OCI-LY7 (cell line): ENCODE measurements at regions of chr1 and their contacts with region 1.

Region 1: GRCh38 chr1:161071886-161072371 is 2.2 kb upstream of the ARHGAP30 start:
- DNase-seq: peak; percentile 70
- H3K4me3 ChIP-seq: no peak overlapping the region
- H3K27ac ChIP-seq: no peak overlapping the region
- H3K4me1 ChIP-seq: peaks cover 26% of the 10 kb centered on the region
- CTCF ChIP-seq: peak; percentile 76

Region 2: DNA sequence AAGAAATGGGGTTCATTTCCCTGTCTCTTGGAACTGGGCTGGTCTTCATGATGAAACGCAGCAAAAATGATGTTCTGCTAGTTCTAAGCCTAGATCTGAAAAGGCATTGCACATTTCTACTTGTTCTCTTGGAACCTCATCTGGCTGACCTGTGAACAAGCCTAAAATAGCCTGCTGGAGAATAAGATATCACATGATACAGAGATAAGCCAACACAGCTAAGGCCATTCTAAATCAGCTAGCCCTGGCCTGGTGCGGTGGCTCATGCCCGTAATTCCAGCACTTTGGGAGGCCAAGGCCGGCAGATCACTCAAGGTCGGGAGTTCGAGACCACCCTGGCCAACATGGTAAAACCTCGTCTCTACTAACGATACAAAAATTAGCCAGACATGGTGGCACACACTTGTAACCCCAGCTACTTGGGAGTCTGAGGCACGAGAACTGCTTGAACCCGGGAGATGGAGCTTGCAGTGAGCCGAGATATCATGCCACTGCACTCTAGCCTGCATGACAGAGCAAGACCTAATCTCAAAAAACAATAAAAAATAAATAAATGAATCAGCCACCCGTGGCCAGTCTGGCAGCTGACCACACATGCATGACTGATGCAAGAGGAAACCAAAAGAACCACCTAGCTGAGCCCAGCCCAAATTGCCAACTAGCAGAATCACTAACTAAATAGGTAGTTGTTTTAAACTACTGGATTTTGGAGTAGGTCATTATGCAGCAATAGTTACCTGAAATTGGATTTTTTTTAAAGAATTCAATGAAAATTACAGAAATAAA is 227.3 kb before region 1 on chr1:
- CTCF ChIA-PET with region 1: no interaction called
- POLR2A ChIA-PET with region 1: no interaction called
- intact Hi-C with region 1: no loop called
- DNase-seq: no peak
- H3K4me3 ChIP-seq: no peak overlapping the region
- H3K27ac ChIP-seq: no peak overlapping the region
- H3K4me1 ChIP-seq: peaks cover 18% of the 10 kb centered on the region
- CTCF ChIP-seq: no peak

Region 3: DNA sequence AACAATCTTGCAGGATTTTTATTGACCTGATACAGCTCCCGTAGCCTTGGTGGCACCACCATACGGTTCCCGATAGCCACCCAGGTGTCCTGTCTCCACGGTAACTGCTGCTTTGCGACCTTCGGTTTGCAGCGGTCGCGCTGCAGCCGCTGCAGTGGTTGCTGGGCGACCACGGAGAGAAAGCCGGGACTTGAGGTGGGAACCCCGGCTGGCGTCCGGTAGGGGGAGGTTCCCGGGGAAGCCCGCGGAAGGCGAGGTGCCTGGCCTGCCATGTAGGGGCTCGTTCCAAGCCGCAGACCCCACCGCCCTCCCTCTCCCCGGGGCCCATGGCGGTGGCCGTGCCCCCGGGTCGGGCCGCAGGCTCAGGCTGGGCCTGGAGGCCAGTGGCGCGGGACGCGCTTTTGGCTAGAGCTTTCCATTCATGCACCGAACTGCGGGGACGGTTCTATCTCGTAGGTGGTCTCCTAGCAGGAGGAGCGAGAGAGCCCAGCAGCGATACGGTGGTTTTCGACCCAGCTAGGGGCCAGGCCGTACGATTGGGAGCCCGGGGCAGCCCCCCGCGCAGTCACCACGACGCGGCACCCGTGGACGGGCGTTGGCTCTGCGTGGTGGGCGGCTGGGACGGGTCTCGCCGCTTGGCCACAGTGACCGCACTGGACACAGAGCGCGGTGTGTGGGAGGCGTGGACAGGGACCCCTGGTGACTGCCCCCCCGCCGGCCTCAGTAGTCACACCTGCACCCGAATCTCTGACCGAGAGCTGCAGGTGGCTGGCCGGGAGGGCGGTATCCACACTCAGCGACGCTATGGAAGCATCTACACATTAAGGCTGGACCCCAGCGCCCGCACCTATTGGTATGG is 26.5 kb after region 1 on chr1 and contains the start of gene KLHDC9:
- CTCF ChIA-PET with region 1: interaction called, 3 read pairs
- POLR2A ChIA-PET with region 1: interaction called, 6 read pairs
- intact Hi-C with region 1: loop called (anchors 1 kb)
- DNase-seq: peak; percentile 86
- H3K4me3 ChIP-seq: peak within 1 kb of the TSS; percentile 65
- H3K27ac ChIP-seq: peak within 1 kb of the TSS; percentile 50
- H3K4me1 ChIP-seq: peaks cover 29% of the 10 kb centered on the region
- CTCF ChIP-seq: no peak
- total RNA-seq, gene KLHDC9: 0.95 and 2.7 TPM in 2 replicates

Region 4: GRCh38 chr1:161117759-161118581 is 46.0 kb after region 1 on chr1 and contains the starts of genes NIT1 and PFDN2:
- CTCF ChIA-PET with region 1: no interaction called
- POLR2A ChIA-PET with region 1: interaction called, 4 read pairs
- intact Hi-C with region 1: loop called (anchors 2 kb)
- DNase-seq: peak; percentile 86
- H3K4me3 ChIP-seq: peak within 1 kb of the TSS; percentile 87
- H3K27ac ChIP-seq: peak within 1 kb of the TSS; percentile 53
- H3K4me1 ChIP-seq: peaks cover 45% of the 10 kb centered on the region
- CTCF ChIP-seq: 0 out of 2 replicates have a peak, but pooled peaks have one; percentile 14
- total RNA-seq, gene NIT1: 30.2 and 42.7 TPM in 2 replicates
- total RNA-seq, gene PFDN2: 52.7 and 55.6 TPM in 2 replicates

Region 5: DNA sequence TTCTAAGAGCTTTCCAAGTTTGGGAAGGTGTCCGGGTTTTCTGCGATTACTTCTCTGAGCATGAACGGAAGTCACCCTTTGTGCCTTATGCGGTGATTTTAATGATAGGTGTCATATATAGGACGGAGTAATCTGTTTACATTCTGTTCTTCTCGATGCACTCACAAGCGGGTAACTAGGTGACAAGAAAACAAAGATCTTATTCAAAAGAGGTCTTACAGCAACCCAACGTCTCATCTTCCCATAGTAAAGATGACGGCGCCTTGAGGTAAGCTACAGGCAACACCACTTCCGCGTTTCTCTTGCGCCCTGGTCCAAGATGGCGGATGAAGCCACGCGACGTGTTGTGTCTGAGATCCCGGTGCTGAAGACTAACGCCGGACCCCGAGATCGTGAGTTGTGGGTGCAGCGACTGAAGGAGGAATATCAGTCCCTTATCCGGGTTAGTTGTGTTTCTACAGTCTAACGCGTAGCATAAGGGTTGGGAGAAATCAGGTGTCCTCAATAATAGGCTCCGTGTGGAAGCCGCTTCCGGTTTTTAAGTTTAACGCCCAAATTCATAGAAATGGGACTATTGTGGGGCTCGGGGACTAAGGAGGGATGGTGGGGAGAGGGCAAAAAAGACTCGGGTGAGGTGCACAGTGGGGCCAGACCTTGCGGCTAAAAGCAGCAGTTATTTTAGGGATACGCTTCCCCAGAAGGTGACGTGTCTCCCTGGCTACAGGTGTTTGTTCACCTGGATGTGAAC is 81.9 kb after region 1 on chr1 and contains the start of gene UFC1:
- CTCF ChIA-PET with region 1: no interaction called
- POLR2A ChIA-PET with region 1: interaction called, 11 read pairs
- intact Hi-C with region 1: loop called (anchors 2 kb)
- DNase-seq: peak; percentile 95
- H3K4me3 ChIP-seq: peak within 1 kb of the TSS; percentile 73
- H3K27ac ChIP-seq: peak within 1 kb of the TSS; percentile 79
- H3K4me1 ChIP-seq: peaks cover 21% of the 10 kb centered on the region
- CTCF ChIP-seq: no peak
- total RNA-seq, gene UFC1: 61.2 and 87.7 TPM in 2 replicates